Endothelial cell of umbilical vein (primary cell): ENCODE measurements at regions of chr1 and their contacts with region 1.

Region 1: GRCh38 chr1:159854693-159855192 is 7.7 kb downstream of the VSIG8 start:
- DNase-seq: peak; percentile 78
- H3K4me3 ChIP-seq: peak overlapping the region; percentile 54 to 60 (median 57)
- H3K27ac ChIP-seq: peak overlapping the region; percentile 24
- H3K4me1 ChIP-seq: peaks cover 16% of the 10 kb centered on the region
- H3K27me3 ChIP-seq: no peaks in the 10 kb centered on the region
- CTCF ChIP-seq: no peak
- POLR2A ChIP-seq: peak; percentile 51

Region 2: GRCh38 chr1:159790237-159790917 is 64.4 kb before region 1 on chr1:
- CTCF ChIA-PET with region 1: no interaction called
- POLR2A ChIA-PET with region 1: no interaction called
- dilution Hi-C with region 1: no loop called
- intact Hi-C with region 1: no loop called
- DNase-seq: peak; percentile 57
- H3K4me3 ChIP-seq: no peak overlapping the region
- H3K27ac ChIP-seq: no peak overlapping the region
- H3K4me1 ChIP-seq: peaks cover 16% of the 10 kb centered on the region
- H3K27me3 ChIP-seq: no peaks in the 10 kb centered on the region
- CTCF ChIP-seq: peak; percentile 61 to 65
- POLR2A ChIP-seq: no peak

Region 3: DNA sequence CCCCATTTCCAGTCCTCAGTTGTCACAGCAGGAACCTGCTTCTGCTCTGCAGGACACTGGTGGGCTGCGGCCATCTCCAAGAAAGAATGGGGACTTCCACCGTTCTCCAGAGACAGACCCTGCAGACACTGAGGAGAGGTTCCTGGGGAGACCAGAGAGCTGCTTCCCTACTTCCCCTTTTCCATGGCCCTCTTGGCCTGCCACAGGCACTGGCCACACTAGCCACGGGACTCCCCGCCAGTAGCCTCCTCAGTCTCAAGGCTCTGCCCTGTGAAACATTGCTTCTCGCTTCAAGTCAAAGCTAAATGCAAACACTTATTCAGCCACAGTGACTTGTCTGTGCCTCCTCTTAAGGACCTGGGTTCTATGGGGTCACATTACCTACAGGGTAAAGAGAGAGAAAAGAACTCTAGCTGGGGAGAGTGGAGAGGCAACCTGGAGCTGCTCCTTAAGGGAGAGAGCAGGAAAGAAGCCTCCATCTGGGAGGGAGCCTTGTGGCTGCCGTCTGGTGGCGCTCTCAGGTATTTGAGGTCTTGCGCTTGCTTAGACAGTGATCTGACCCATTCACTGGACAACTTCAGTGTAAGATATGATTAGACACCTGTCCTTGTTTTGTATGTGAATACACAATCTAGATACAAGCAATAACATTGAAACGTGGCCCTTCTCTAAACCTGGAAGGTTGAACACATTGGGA is 33.4 kb before region 1 on chr1:
- CTCF ChIA-PET with region 1: no interaction called
- POLR2A ChIA-PET with region 1: no interaction called
- dilution Hi-C with region 1: no loop called
- intact Hi-C with region 1: no loop called
- DNase-seq: no peak
- H3K4me3 ChIP-seq: no peak overlapping the region
- H3K27ac ChIP-seq: no peak overlapping the region
- H3K4me1 ChIP-seq: peaks cover 3% of the 10 kb centered on the region
- H3K27me3 ChIP-seq: peaks cover 25 to 31% of the 10 kb centered on the region in 2 experiments
- CTCF ChIP-seq: no peak
- POLR2A ChIP-seq: no peak

Region 4: GRCh38 chr1:159839116-159839849 is 15.5 kb before region 1 on chr1:
- CTCF ChIA-PET with region 1: interaction called, 10 read pairs
- POLR2A ChIA-PET with region 1: no interaction called
- dilution Hi-C with region 1: no loop called
- intact Hi-C with region 1: no loop called
- DNase-seq: no peak
- H3K4me3 ChIP-seq: no peak overlapping the region
- H3K27ac ChIP-seq: no peak overlapping the region
- H3K4me1 ChIP-seq: no peaks in the 10 kb centered on the region
- H3K27me3 ChIP-seq: no peaks in the 10 kb centered on the region
- CTCF ChIP-seq: no peak
- POLR2A ChIP-seq: no peak

Region 5: GRCh38 chr1:159881930-159882839 is 27.4 kb after region 1 on chr1:
- CTCF ChIA-PET with region 1: interaction called, 3 read pairs
- POLR2A ChIA-PET with region 1: no interaction called
- dilution Hi-C with region 1: no loop called
- intact Hi-C with region 1: loop called (anchors 2 kb)
- DNase-seq: peak; percentile 89
- H3K4me3 ChIP-seq: no peak overlapping the region
- H3K27ac ChIP-seq: peak overlapping the region; percentile 70
- H3K4me1 ChIP-seq: peaks cover 16% of the 10 kb centered on the region
- H3K27me3 ChIP-seq: no peaks in the 10 kb centered on the region
- CTCF ChIP-seq: no peak
- POLR2A ChIP-seq: peak; percentile 40

Region 6: GRCh38 chr1:160504666-160505065 is 649.9 kb after region 1 on chr1:
- CTCF ChIA-PET with region 1: no interaction called
- POLR2A ChIA-PET with region 1: no interaction called
- dilution Hi-C with region 1: no loop called
- intact Hi-C with region 1: no loop called
- DNase-seq: no peak
- H3K4me3 ChIP-seq: no peak overlapping the region
- H3K27ac ChIP-seq: no peak overlapping the region
- H3K4me1 ChIP-seq: no peaks in the 10 kb centered on the region
- H3K27me3 ChIP-seq: no peaks in the 10 kb centered on the region
- CTCF ChIP-seq: no peak
- POLR2A ChIP-seq: no peak